Transverse colon (tissue), 4 donors: ENCODE measurements at regions of chr1 and their contacts with region 1.

Region 1: GRCh38 chr1:29793101-29793546 is 556.8 kb downstream of the PTPRU start:
- DNase-seq: peak; percentile 80
- H3K4me3 ChIP-seq: no peak overlapping the region
- H3K27ac ChIP-seq: no peak overlapping the region
- H3K4me1 ChIP-seq: no peaks in the 10 kb centered on the region
- H3K27me3 ChIP-seq: peaks cover 12% of the 10 kb centered on the region
- CTCF ChIP-seq: peak; percentile 50 to 79 (median 72)
- EP300 ChIP-seq: no peak
- POLR2A ChIP-seq: no peak

Region 2: GRCh38 chr1:29271724-29272123 is 521.4 kb before region 1 on chr1:
- in situ Hi-C with region 1: loop called in 1 of 4 experiments (anchors 25 kb)
- intact Hi-C with region 1: no loop called
- DNase-seq: peak; percentile 84
- H3K4me3 ChIP-seq: no peak overlapping the region
- H3K27ac ChIP-seq: peak overlapping the region in 3 of 4 donors; percentile 33 to 47 (median 38)
- H3K4me1 ChIP-seq: peaks cover 10 to 26% (median 16%) of the 10 kb centered on the region in 4 donors
- H3K27me3 ChIP-seq: no peaks in the 10 kb centered on the region
- CTCF ChIP-seq: no peak
- EP300 ChIP-seq: no peak
- POLR2A ChIP-seq: no peak

Region 3: GRCh38 chr1:29478151-29478791 is 314.9 kb before region 1 on chr1:
- in situ Hi-C with region 1: no loop called
- intact Hi-C with region 1: no loop called
- DNase-seq: no peak
- H3K4me3 ChIP-seq: no peak overlapping the region
- H3K27ac ChIP-seq: no peak overlapping the region
- H3K4me1 ChIP-seq: no peaks in the 10 kb centered on the region
- H3K27me3 ChIP-seq: peaks cover 44% of the 10 kb centered on the region
- CTCF ChIP-seq: no peak
- EP300 ChIP-seq: no peak
- POLR2A ChIP-seq: no peak

Region 4: GRCh38 chr1:29835874-29836273 is 42.8 kb after region 1 on chr1:
- in situ Hi-C with region 1: no loop called
- intact Hi-C with region 1: no loop called
- DNase-seq: no peak
- H3K4me3 ChIP-seq: no peak overlapping the region
- H3K27ac ChIP-seq: no peak overlapping the region
- H3K4me1 ChIP-seq: no peaks in the 10 kb centered on the region
- H3K27me3 ChIP-seq: peaks cover 12% of the 10 kb centered on the region
- CTCF ChIP-seq: no peak
- EP300 ChIP-seq: no peak
- POLR2A ChIP-seq: no peak

Region 5: DNA sequence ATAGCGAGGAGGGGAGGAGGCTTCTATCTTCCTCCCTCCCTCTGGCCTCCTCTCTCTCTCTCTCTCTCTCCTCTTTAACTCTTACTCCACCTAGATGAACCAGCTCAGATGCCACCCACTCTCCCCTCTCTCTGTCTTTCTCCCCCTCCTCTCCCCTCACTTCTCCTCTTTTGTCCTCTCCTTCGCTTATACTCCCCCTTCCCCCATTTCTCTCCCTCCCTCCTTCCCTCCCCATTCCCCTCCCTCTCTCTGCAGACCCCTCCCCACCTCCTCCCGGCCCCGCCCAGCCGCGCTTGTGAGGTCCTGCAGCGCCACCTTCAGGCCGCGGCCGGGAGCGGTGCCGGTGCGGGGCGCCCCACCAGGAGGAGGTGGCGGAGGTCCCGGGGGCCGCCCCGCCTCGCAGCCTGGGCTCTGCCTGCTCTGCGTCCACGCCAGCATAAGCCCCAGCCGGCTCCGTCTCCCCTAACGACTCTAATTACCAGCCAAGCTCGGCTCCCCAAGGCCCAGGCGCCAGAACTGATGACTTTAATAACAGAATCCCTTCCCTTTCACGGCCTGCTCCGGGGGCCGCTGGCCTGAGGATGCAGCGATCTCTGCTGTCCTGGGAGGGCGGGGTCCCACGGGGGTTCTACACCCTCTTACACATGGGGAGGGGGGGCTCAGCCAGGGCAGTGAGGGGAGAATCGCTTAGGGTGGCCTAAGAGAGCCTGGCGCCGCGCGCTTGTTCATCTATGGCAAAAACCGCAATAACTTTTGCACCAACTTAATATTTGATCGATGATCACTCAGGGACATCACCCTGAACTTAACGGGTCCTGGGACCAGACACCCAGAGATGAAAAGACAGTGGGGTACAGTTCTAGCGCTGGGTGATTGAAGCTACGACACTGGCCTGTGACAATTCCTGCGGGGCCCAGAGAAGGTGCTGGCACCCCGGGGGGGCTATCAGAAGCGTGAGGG is 293.0 kb after region 1 on chr1:
- in situ Hi-C with region 1: loop called in 2 of 4 experiments (anchors 25 kb)
- intact Hi-C with region 1: no loop called
- DNase-seq: peak; percentile 41
- H3K4me3 ChIP-seq: no peak overlapping the region
- H3K27ac ChIP-seq: no peak overlapping the region
- H3K4me1 ChIP-seq: peaks cover 11 to 41% (median 19%) of the 10 kb centered on the region in 4 donors
- H3K27me3 ChIP-seq: no peaks in the 10 kb centered on the region
- CTCF ChIP-seq: peak; percentile 59 to 78 (median 73)
- EP300 ChIP-seq: no peak
- POLR2A ChIP-seq: no peak

Region 6: GRCh38 chr1:30111431-30111830 is 318.3 kb after region 1 on chr1:
- in situ Hi-C with region 1: loop called in 1 of 4 experiments (anchors 25 kb)
- intact Hi-C with region 1: no loop called
- DNase-seq: peak; percentile 51
- H3K4me3 ChIP-seq: no peak overlapping the region
- H3K27ac ChIP-seq: no peak overlapping the region
- H3K4me1 ChIP-seq: peaks cover 0 to 2% (median 0%) of the 10 kb centered on the region in 4 donors
- H3K27me3 ChIP-seq: peaks cover 49% of the 10 kb centered on the region
- CTCF ChIP-seq: peak; percentile 37 to 55 (median 52)
- EP300 ChIP-seq: no peak
- POLR2A ChIP-seq: no peak

Region 7: DNA sequence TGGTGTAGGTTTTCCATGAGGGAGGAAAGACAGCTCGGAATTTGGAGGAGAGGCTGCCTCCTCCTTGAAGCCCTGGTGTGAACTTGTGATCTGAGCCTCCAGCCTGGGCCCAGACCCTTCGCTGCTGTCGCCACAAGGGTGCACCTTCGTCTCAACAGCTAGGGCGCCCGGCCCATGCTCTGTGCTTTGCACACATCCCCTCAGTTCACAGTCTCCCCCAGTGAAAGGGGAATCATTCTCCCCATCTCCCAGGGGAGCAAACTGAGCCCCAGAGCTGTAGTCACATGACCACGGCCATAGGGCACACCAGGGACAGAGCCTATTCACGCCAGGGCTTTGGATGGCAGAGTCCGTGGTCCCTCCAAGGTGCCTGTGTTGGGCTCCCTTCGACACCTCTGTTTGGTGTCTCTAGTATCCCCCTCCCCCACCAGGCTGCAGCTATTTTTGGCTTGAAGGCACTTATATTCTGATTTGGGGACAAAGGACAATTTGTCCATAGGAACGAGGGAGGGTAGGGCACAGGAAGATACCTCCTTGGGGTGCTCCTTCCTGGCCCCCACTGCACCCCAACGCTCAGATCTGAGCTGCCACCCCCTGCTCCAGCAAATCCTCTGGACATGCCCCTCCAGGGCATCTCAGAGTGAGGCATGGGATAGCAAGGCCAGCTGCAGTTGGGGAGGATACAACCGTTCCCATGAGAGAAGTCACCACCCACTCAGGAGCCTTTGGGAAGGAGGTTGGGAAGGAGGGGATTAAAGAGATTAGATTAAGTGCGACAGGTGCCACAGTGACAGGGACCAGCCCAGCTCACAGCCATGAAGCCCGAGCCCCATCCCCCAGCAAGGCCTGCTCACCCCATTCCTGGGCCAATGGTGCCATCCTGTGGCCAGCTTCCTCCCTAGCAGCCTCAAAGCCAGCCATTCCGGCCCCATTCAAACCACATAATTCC is 914.6 kb after region 1 on chr1:
- in situ Hi-C with region 1: no loop called
- intact Hi-C with region 1: loop called (anchors 10 kb)
- DNase-seq: peak; percentile 72
- H3K4me3 ChIP-seq: no peak overlapping the region
- H3K27ac ChIP-seq: no peak overlapping the region
- H3K4me1 ChIP-seq: peaks cover 0 to 13% (median 9%) of the 10 kb centered on the region in 4 donors
- H3K27me3 ChIP-seq: peaks cover 10% of the 10 kb centered on the region
- CTCF ChIP-seq: peak; percentile 75 to 91 (median 75)
- EP300 ChIP-seq: no peak
- POLR2A ChIP-seq: no peak